ENCODE measurements at regions of chr10 and their contacts with region 1.

Region 1: DNA sequence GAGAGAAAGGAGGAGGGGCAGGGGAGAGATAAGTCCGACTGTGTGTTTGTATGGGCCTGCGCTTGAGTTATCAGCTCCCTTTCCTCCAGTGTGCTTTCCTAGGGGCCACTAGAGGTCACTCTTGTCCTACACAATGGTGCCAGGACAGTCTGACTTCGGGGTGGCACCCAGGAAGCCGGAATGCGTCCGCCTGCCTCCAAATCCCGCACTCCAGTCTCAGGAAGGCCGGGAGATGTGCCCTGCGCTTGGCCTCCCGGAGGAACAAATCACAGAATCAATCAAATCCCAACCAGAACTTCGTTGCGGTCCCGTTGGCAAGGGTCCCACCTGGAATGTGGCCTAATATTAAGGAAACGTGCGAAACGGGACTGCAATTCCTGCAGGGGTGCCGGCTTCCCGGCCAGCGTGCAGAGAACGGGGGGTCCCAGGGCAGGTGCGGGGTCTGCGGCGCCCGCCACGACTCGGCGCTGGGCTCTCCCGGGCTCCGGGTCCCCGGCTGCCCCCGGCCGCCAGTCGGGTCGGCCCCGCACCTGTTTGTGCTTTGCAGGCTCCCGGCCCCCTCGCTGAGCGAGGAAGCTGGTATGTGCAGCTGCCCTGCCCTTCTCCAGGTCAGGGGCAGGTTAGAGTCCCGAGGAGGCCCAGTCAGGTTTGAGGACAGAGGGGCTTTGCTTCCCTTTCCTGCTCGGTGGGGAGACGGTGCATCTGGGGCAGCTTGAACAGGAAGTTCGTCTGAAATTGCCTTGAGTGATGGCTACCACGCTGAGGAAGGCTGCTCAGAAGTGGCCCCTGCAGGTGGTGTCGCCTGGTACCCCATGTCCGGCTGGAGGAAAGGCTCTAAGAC is 21.0 kb upstream of the HPS1 start:
- DNase-seq: peak; percentile 87
- CTCF ChIP-seq: peak; percentile 76

Region 2: GRCh38 chr10:98664331-98665042 is 196.8 kb after region 1 on chr10:
- in situ Hi-C with region 1: loop called (anchors 5 kb)
- DNase-seq: peak; percentile 54
- CTCF ChIP-seq: peak; percentile 57

Region 3: DNA sequence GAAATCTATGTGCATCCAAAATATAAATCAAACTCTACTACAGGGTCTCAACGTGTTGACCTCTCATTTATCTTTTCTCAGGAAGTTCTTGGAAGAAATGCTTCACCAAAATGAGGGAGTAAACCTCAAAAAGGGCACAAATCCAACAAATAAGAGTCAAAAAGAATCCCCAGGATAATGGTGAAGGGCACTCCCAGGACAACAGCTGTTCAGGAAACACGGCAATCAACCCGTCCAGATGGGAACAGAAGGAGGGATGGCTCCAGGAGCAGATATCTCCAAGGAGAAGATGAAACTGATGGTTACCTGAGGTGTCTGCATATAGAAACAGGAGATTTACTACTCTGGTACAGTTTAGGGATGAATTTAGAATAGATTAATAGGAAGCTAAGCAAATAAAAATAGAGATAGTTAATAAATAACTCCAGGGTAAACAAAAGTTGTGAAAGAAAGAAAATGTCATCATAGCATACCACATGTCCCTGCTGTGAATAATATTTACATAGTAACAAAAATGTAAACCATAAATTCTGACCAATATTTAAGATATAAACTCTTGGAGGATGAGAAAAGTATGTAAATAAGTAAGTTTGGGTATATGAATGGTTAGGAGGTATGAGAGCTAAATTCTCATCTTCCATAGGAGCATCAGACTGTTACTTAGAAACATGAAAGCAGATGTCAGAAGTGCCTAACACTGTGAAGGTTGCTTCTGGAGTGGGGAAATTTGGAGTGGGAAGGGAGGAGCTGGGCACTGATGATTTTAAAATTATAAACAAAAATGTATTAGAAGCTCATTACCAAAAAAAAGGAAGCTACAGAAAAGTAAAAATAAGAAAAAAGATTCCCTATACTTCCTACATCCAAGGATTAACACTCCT is 216.5 kb after region 1 on chr10:
- in situ Hi-C with region 1: no loop called
- DNase-seq: no peak
- CTCF ChIP-seq: no peak

Region 4: DNA sequence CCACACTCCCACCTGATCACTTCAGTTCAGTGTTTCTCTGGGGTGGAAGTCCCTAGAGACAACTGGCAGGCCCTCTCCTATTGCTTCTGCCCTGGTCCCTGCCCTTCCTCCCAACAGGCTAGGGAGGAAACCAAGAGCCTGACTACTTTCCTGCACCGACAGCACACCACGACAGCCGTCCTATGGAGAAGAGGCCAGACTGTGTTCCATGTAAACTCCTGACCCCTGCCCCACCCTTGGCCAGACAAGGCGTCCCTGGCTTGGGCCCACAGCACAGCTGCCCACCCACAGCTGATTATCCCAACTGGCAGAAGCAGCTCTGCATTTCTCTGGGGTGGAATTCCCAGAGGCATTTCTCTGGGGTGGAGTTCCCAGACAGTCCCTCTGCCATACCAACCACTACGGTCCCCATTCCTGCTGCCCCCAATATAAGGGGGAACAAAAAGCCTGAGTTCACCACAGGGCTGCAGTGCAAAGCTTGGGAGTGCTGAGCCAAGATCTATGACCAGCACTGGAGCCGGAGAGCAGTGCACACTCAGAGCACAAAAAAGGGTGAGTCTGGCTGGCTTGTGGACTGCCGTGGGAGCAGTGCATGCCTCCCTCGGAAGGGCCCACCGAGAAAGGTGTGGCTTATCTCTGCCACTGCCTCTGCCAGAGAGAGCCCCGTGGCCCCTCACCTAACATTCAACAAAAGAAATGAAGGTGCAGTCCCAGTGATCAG is 574.5 kb after region 1 on chr10:
- in situ Hi-C with region 1: loop called (anchors 25 kb)
- DNase-seq: no peak
- CTCF ChIP-seq: no peak

Region 5: GRCh38 chr10:99234041-99234790 is 766.5 kb after region 1 on chr10:
- in situ Hi-C with region 1: loop called (anchors 25 kb)
- DNase-seq: peak; percentile 90
- CTCF ChIP-seq: peak; percentile 16

Measured in GM13976 (cell line).